ENCODE measurements at regions of chr19 and their contacts with region 1.

Region 1: GRCh38 chr19:12847159-12848139 is 9.1 kb downstream of the MAST1 start:
- DNase-seq: peak; percentile 59 to 88 (median 77)
- ATAC-seq: peak; percentile 95
- H3K4me3 ChIP-seq: peak overlapping the region; percentile 31
- H3K4me3 Mint-ChIP-seq: no peak overlapping the region
- H3K27ac ChIP-seq: no peak overlapping the region
- H3K27ac Mint-ChIP-seq: no peak overlapping the region
- H3K4me1 ChIP-seq: peaks cover 11% of the 10 kb centered on the region
- H3K4me1 Mint-ChIP-seq: no peaks in the 10 kb centered on the region
- H3K27me3 ChIP-seq: peaks cover 29 to 41% of the 10 kb centered on the region in 2 experiments
- H3K27me3 Mint-ChIP-seq: peaks cover 43% of the 10 kb centered on the region
- CTCF ChIP-seq: peak; percentile 99

Region 2: GRCh38 chr19:12716861-12717260 is 130.6 kb before region 1 on chr19:
- CTCF ChIA-PET with region 1: interaction called, 5 read pairs
- POLR2A ChIA-PET with region 1: no interaction called
- intact Hi-C with region 1: loop called (anchors 1 to 2 kb)
- DNase-seq: peak in 11 of 14 experiments; percentile 21 to 79 (median 40)
- ATAC-seq: peak; percentile 83
- H3K4me3 ChIP-seq: no peak overlapping the region
- H3K4me3 Mint-ChIP-seq: peak overlapping the region; percentile 56
- H3K27ac ChIP-seq: no peak overlapping the region
- H3K27ac Mint-ChIP-seq: no peak overlapping the region
- H3K4me1 ChIP-seq: peaks cover 19% of the 10 kb centered on the region
- H3K4me1 Mint-ChIP-seq: peaks cover 26% of the 10 kb centered on the region
- H3K27me3 ChIP-seq: no peaks in the 10 kb centered on the region
- H3K27me3 Mint-ChIP-seq: no peaks in the 10 kb centered on the region
- CTCF ChIP-seq: no peak

Region 3: DNA sequence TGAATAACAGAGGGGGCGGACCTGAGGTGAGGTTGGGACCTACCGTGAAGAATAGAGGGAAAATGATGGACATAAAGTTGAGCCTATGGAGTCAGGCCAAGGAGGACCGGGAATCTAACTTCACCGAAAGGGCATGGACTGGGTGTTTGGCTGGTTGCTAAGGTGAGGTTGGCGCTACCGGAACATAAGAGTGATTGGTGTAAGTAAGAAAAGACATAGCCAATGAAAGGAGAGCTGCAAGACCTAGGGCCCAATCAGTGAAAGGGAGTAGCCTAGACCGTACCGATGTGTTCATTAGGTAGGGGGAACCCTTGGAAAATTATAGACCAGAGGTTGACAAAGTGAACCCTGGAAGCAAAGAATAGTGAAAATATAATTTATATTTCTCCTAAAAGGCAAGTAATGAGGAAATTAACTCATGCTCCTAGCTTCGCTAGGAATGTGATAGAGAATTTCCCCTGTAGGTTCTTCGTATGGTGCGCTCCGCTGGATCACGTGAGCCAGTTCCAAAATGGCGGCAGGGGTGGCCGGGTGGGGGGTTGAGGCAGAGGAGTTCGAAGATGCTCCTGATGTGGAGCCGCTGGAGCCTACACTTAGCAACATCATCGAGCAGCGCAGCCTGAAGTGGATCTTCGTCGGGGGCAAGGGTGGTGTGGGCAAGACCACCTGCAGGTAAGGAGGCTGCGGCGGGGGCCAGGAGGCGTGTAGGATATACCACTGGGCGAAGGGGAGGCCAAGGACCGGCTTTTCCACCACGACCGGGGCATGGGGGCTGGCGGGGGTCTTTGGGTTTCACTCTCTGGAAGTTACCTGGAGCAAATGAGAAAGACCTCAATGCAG is 110.2 kb before region 1 on chr19 and contains the start of gene GET3:
- CTCF ChIA-PET with region 1: interaction called, 10 read pairs
- POLR2A ChIA-PET with region 1: interaction called, 3 read pairs
- intact Hi-C with region 1: no loop called
- DNase-seq: peak; percentile 66 to 92 (median 74)
- ATAC-seq: peak; percentile 82
- H3K4me3 ChIP-seq: peak within 1 kb of the TSS; percentile 79
- H3K4me3 Mint-ChIP-seq: peak within 1 kb of the TSS; percentile 96
- H3K27ac ChIP-seq: peak within 1 kb of the TSS; percentile 76
- H3K27ac Mint-ChIP-seq: peak within 1 kb of the TSS; percentile 86
- H3K4me1 ChIP-seq: peaks cover 52% of the 10 kb centered on the region
- H3K4me1 Mint-ChIP-seq: peaks cover 38% of the 10 kb centered on the region
- H3K27me3 ChIP-seq: no peaks in the 10 kb centered on the region
- H3K27me3 Mint-ChIP-seq: no peaks in the 10 kb centered on the region
- CTCF ChIP-seq: no peak
- total RNA-seq, gene GET3: 13.9 to 14.5 TPM

Region 4: GRCh38 chr19:12766051-12766521 is 81.4 kb before region 1 on chr19:
- CTCF ChIA-PET with region 1: interaction called, 29 read pairs
- POLR2A ChIA-PET with region 1: interaction called, 7 read pairs
- intact Hi-C with region 1: loop called (anchors 1 to 2 kb)
- DNase-seq: peak in 10 of 14 experiments; percentile 66 to 91 (median 80)
- ATAC-seq: peak; percentile 77
- H3K4me3 ChIP-seq: no peak overlapping the region
- H3K4me3 Mint-ChIP-seq: no peak overlapping the region
- H3K27ac ChIP-seq: no peak overlapping the region
- H3K27ac Mint-ChIP-seq: no peak overlapping the region
- H3K4me1 ChIP-seq: peaks cover 22% of the 10 kb centered on the region
- H3K4me1 Mint-ChIP-seq: peaks cover 7% of the 10 kb centered on the region
- H3K27me3 ChIP-seq: no peaks in the 10 kb centered on the region
- H3K27me3 Mint-ChIP-seq: no peaks in the 10 kb centered on the region
- CTCF ChIP-seq: peak; percentile 90

Measured in CD4-positive, alpha-beta T cell (primary cell).